ENCODE measurements at regions of chrX and their contacts with region 1.

Region 1: GRCh38 chrX:151082076-151082948 is 94.1 kb upstream of the GPR50 start:
- DNase-seq: peak; percentile 53
- H3K4me3 ChIP-seq: peak overlapping the region; percentile 35
- H3K27ac ChIP-seq: no peak overlapping the region
- H3K4me1 ChIP-seq: no peaks in the 10 kb centered on the region
- H3K27me3 ChIP-seq: no peaks in the 10 kb centered on the region
- CTCF ChIP-seq: peak; percentile 90

Region 2: DNA sequence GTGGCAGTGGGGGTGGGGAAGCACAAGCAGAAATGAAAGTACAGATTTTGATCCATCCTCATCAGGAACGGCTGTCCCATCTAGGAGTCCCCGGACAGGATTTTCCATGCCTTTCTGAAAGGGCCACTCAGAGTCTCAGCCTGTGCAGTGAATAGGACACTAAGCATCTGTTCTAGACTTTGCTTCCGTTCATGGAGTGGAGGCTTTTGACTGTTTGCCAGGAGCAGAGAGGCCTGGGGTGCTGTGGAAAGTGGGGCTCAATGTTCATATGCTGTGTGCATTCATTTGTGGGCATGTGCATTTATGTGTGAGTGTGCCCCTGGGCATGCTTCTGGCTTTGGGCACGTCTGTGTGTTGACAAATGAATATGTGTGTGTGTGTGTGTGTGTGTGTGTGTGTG is 744.8 kb before region 1 on chrX:
- intact Hi-C with region 1: no loop called
- DNase-seq: no peak
- H3K4me3 ChIP-seq: no peak overlapping the region
- H3K27ac ChIP-seq: no peak overlapping the region
- H3K4me1 ChIP-seq: peaks cover 7% of the 10 kb centered on the region
- H3K27me3 ChIP-seq: no peaks in the 10 kb centered on the region
- CTCF ChIP-seq: no peak

Region 3: GRCh38 chrX:150772150-150772970 is 310.0 kb before region 1 on chrX:
- intact Hi-C with region 1: loop called (anchors 5 kb)
- DNase-seq: peak; percentile 71
- H3K4me3 ChIP-seq: no peak overlapping the region
- H3K27ac ChIP-seq: no peak overlapping the region
- H3K4me1 ChIP-seq: peaks cover 7% of the 10 kb centered on the region
- H3K27me3 ChIP-seq: no peaks in the 10 kb centered on the region
- CTCF ChIP-seq: peak; percentile 80

Region 4: GRCh38 chrX:151359931-151360871 is 277.9 kb after region 1 on chrX:
- intact Hi-C with region 1: no loop called
- DNase-seq: no peak
- H3K4me3 ChIP-seq: peak overlapping the region; percentile 39
- H3K27ac ChIP-seq: no peak overlapping the region
- H3K4me1 ChIP-seq: no peaks in the 10 kb centered on the region
- H3K27me3 ChIP-seq: no peaks in the 10 kb centered on the region
- CTCF ChIP-seq: peak; percentile 63

Measured in left ventricle myocardium inferior (tissue), 1 donor.